ENCODE measurements at regions of chr14 and their contacts with region 1.

Region 1: DNA sequence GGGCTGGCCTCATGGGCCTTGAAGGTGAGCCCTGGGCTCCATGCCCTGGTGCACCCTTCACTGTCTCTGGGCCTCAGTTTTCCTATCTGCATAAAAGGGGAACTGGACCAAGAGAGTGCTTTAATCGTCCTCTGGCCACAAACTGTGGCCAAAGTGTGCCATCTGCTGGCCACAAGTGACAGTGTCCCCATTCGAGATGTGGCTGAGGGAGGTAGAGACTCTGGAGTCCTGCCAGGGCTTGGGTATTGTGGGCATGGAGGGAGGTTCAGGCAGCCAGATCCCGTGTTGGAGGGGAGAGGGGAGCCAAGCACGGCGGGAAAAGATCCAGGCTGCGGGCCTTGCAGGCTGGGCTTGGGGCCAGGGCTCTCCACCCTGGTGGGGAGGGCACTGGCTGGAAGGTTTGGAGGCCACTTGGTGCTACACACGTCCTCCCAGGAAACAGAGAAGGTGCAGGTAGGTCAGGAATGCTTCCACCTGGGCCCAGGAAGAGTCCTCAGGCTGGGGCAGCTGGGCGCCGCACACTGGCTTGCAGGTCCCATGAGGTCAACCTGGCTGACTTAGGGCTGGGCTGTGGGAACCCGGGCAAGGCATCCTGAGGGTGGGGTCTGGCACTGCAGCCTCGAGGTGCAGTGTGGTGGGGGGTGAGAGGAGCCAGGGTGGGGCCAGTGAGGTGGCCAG is 7.3 kb upstream of the KIF26A start:
- DNase-seq: peak; percentile 62 to 69
- ATAC-seq: peak; percentile 49 to 81 (median 68)
- H3K4me3 ChIP-seq: no peak overlapping the region
- H3K27ac ChIP-seq: no peak overlapping the region
- H3K4me1 ChIP-seq: peaks cover 0 to 11% (median 10%) of the 10 kb centered on the region in 9 donors
- H3K27me3 ChIP-seq: peaks cover 7 to 41% (median 30%) of the 10 kb centered on the region in 7 donors
- CTCF ChIP-seq: peak; percentile 32 to 76 (median 70)

Region 2: GRCh38 chr14:104210041-104210816 is 79.1 kb after region 1 on chr14:
- intact Hi-C with region 1: no loop called
- DNase-seq: peak in 1 of 2 donors; percentile 5
- ATAC-seq: no peak
- H3K4me3 ChIP-seq: no peak overlapping the region
- H3K27ac ChIP-seq: no peak overlapping the region
- H3K4me1 ChIP-seq: no peaks in the 10 kb centered on the region
- H3K27me3 ChIP-seq: peaks cover 0 to 31% (median 8%) of the 10 kb centered on the region in 7 donors
- CTCF ChIP-seq: no peak

Region 3: GRCh38 chr14:104639889-104640548 is 508.9 kb after region 1 on chr14:
- intact Hi-C with region 1: loop called (anchors 2 to 5 kb)
- DNase-seq: peak; percentile 48 to 62
- ATAC-seq: peak; percentile 77 to 95 (median 86)
- H3K4me3 ChIP-seq: no peak overlapping the region
- H3K27ac ChIP-seq: no peak overlapping the region
- H3K4me1 ChIP-seq: peaks cover 0 to 16% (median 4%) of the 10 kb centered on the region in 9 donors
- H3K27me3 ChIP-seq: peaks cover 0 to 46% (median 20%) of the 10 kb centered on the region in 7 donors
- CTCF ChIP-seq: peak; percentile 75 to 94 (median 92)